ENCODE measurements at regions of chr4 and their contacts with region 1.

Region 1: DNA sequence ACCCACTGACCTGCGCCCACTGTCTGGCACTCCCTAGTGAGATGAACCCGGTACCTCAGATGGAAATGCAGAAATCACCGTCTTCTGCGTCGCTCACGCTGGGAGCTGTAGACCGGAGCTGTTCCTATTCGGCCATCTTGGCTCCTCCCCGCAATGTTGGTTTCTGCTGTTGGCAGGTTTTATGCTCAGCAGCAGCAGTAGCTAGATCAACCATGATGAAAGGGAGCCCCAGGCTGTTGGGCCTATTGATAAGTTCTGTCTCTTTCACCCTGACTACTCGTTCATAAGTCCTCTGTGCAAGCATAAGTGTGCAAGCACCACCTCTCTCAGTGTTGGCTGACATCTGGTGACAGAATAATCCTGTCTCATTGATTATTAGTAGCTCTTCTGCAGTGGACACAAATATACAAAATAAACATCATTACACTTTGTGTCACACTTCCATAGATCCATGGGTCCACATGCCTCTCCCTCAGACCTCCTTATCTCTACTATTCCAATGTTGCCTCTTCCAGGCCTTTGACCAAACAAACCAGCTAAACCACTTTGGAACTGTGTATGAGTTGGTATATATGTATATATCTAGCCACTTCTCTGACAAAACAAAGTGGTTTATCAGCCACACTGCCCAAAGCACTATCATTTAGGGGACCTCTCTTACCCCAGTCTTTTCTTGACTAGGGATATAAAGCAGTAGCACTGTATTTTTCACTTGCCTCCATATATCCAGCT is 274.0 kb downstream of the PRDM5 start:
- DNase-seq: peak; percentile 43 to 55
- H3K4me3 ChIP-seq: peak overlapping the region; percentile 36
- H3K4me3 Mint-ChIP-seq: peak overlapping the region; percentile 79
- H3K27ac Mint-ChIP-seq: peak overlapping the region; percentile 80
- H3K4me1 ChIP-seq: peaks cover 4% of the 10 kb centered on the region; the same call in 1 of the 2 replicates
- H3K4me1 Mint-ChIP-seq: peaks cover 7% of the 10 kb centered on the region
- H3K27me3 ChIP-seq: no peaks in the 10 kb centered on the region
- H3K27me3 Mint-ChIP-seq: peaks cover 2% of the 10 kb centered on the region
- CTCF ChIP-seq: no peak

Region 2: DNA sequence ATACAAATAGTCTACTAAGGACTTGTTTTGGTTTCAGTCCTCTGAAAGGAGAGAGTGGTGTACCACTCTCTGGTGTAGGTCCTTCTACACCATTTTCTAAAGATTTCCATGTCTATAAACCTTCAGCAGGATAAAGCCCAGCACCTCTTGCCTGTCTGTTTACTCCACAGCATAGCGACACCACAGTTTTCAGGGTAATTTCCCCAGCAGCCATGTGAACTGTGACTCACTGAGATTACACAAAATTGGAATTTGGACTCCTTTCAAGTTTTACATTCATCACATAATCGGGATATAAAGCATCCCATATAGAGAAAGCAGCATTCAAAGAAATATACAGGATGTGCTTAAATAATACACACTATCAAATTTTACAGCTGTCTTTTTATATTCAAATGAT is 44.5 kb after region 1 on chr4:
- CTCF ChIA-PET with region 1: no interaction called
- POLR2A ChIA-PET with region 1: no interaction called
- intact Hi-C with region 1: loop called (anchors 2 kb)
- DNase-seq: peak; percentile 44 to 55
- H3K4me3 ChIP-seq: no peak overlapping the region
- H3K4me3 Mint-ChIP-seq: no peak overlapping the region
- H3K27ac Mint-ChIP-seq: no peak overlapping the region
- H3K4me1 ChIP-seq: peaks cover 12% of the 10 kb centered on the region; the same call in 1 of the 2 replicates
- H3K4me1 Mint-ChIP-seq: peaks cover 6% of the 10 kb centered on the region
- H3K27me3 ChIP-seq: no peaks in the 10 kb centered on the region
- H3K27me3 Mint-ChIP-seq: no peaks in the 10 kb centered on the region
- CTCF ChIP-seq: no peak

Measured in Caco-2 (cell line).